ENCODE measurements at regions of chr17 and their contacts with region 1.

Region 1: GRCh38 chr17:60059082-60059481 is 19.6 kb downstream of the HEATR6 start:
- DNase-seq: no peak
- ATAC-seq: no peak
- H3K4me3 ChIP-seq: no peak overlapping the region
- H3K27ac ChIP-seq: no peak overlapping the region
- H3K4me1 ChIP-seq: no peaks in the 10 kb centered on the region
- H3K27me3 ChIP-seq: no peaks in the 10 kb centered on the region
- CTCF ChIP-seq: no peak

Region 2: GRCh38 chr17:59671386-59671785 is 387.7 kb before region 1 on chr17:
- intact Hi-C with region 1: loop called (anchors 5 to 10 kb)
- DNase-seq: no peak
- ATAC-seq: no peak
- H3K4me3 ChIP-seq: no peak overlapping the region
- H3K27ac ChIP-seq: no peak overlapping the region
- H3K4me1 ChIP-seq: no peaks in the 10 kb centered on the region
- H3K27me3 ChIP-seq: no peaks in the 10 kb centered on the region
- CTCF ChIP-seq: no peak

Region 3: GRCh38 chr17:60091908-60092331 is 32.8 kb after region 1 on chr17:
- intact Hi-C with region 1: no loop called
- DNase-seq: no peak
- ATAC-seq: no peak
- H3K4me3 ChIP-seq: no peak overlapping the region
- H3K27ac ChIP-seq: no peak overlapping the region
- H3K4me1 ChIP-seq: no peaks in the 10 kb centered on the region
- H3K27me3 ChIP-seq: no peaks in the 10 kb centered on the region
- CTCF ChIP-seq: no peak

Measured in psoas muscle (tissue), 8 donors.